GM12878 (cell line): ENCODE measurements at regions of chr15 and their contacts with region 1.

Region 1: DNA sequence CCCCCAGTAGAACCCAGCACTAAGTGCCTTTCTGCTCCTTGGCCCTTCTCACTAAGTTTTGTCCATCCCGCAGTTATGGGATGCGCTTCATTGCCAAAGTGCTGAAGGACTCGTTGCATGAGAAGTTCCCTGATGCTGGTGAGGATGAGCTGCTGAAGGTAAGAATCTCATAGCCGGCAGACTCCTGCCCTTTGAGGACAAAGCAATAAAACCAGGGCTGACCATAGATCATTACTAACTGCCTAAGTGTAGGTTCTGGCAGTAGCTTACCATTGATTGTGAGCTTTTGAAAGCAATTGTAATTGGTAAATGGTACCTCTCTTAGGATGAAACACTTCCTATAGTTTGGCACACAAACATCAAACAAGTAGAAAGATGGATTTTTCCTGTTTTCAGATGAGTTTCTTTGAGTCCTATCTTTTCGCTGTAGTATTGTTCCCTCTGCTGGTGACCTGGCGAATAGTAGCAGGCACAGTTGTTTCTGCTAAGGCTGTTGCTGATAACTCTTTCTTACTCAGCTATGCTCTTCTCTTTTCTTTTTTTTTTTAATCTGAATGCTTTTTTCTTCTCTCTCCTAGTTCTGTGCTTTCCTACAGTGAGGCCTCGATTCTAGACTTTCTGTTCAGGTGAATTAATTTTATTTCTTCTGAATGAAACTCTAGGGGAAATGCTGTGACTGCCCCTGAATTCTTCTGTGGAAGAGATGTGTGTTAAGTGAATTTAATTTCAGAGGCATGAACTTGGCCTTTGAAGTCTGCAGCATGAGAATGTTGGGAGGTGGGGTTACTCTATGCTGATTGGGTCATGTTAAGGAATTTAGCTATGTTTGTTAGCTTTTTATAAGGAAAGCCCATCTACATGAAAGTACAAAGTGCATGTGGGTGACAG is 47.4 kb upstream of the CRTC3 start:
- DNase-seq: no peak
- ATAC-seq: peak; percentile 69
- H3K4me3 ChIP-seq: no peak overlapping the region
- H3K27ac ChIP-seq: no peak overlapping the region
- H3K4me1 ChIP-seq: no peaks in the 10 kb centered on the region
- H3K27me3 ChIP-seq: no peaks in the 10 kb centered on the region
- CTCF ChIP-seq: peak; percentile 52 to 66 (median 53); a peak in 4 of 6 replicates
- EP300 ChIP-seq: no peak
- POLR2A ChIP-seq: no peak
- RAD21 ChIP-seq: peak; percentile 82

Region 2: DNA sequence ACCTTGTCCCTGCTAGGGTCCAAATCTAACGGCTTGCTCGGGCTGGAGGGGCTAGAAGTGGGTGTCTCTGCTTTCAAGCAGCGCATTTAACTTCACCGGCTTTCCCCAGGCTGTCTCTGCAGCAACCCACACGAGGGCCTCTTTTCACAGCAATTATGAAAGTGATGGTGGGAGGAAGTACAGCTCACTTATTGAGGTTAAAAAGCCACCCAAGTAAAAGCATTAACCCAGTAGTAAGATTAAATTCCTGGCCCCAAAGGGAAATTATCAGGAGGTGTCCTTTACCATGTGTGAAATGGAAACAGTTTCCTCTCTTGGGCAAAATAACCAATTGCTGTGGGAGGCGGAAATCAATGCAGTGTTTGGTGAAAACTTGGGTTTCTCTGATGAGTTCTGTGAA is 175.8 kb before region 1 on chr15:
- CTCF ChIA-PET with region 1: interaction called, 20 read pairs
- POLR2A ChIA-PET with region 1: interaction called, 7 read pairs
- RAD21 ChIA-PET with region 1: interaction called, 7 read pairs
- SMC1A ChIA-PET with region 1: interaction called, 5 read pairs
- in situ Hi-C with region 1: no loop called
- intact Hi-C with region 1: no loop called
- DNase-seq: peak; percentile 36
- ATAC-seq: peak; percentile 96
- H3K4me3 ChIP-seq: peak overlapping the region; percentile 17; the same call in 1 of the 2 replicates
- H3K27ac ChIP-seq: peak overlapping the region; percentile 60
- H3K4me1 ChIP-seq: peaks cover 22% of the 10 kb centered on the region
- H3K27me3 ChIP-seq: no peaks in the 10 kb centered on the region
- CTCF ChIP-seq: peak in 1 of 3 experiments; percentile 37; a peak in 2 of 6 replicates
- EP300 ChIP-seq: no peak
- POLR2A ChIP-seq: 0 out of 2 replicates have a peak, but pooled peaks have one; percentile 28
- RAD21 ChIP-seq: peak; percentile 39

Region 3: GRCh38 chr15:90463381-90463780 is 19.0 kb before region 1 on chr15:
- CTCF ChIA-PET with region 1: interaction called, 13 read pairs
- POLR2A ChIA-PET with region 1: interaction called, 3 read pairs
- RAD21 ChIA-PET with region 1: no interaction called
- SMC1A ChIA-PET with region 1: interaction called, 23 read pairs
- in situ Hi-C with region 1: no loop called
- intact Hi-C with region 1: no loop called
- DNase-seq: no peak
- ATAC-seq: peak; percentile 88
- H3K4me3 ChIP-seq: no peak overlapping the region
- H3K27ac ChIP-seq: no peak overlapping the region
- H3K4me1 ChIP-seq: peaks cover 3% of the 10 kb centered on the region; the same call in 1 of the 2 replicates
- H3K27me3 ChIP-seq: no peaks in the 10 kb centered on the region
- CTCF ChIP-seq: no peak
- EP300 ChIP-seq: no peak
- POLR2A ChIP-seq: no peak
- RAD21 ChIP-seq: no peak

Region 4: DNA sequence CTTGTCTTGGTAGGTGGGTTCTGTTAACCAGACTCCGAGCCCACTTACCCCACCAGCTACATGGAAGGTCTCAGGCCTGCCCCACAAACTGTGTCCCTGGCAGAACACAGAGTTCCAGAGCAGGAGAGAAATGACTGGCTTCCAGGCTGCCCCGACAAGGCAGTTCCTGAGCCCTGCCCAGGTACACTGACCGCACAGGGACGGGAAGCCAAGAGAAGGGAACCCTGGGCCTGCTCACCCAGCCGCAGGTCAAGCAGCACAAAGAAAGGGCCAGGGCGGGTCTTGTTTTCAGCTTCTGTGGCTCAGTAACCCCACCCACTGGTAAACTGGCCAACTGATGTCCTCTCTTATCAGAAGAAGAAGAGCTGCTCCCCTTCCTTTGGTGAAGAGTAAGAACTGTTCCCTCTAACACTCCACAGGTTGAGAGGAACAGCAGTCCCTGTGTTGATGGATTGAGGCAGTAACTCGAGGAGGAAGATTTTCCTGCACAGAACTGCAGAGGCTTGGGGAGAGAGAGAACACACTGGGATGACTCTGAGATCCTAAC is 115.7 kb after region 1 on chr15:
- CTCF ChIA-PET with region 1: interaction called, 14 read pairs
- POLR2A ChIA-PET with region 1: no interaction called
- RAD21 ChIA-PET with region 1: interaction called, 5 read pairs
- SMC1A ChIA-PET with region 1: interaction called, 9 read pairs
- in situ Hi-C with region 1: no loop called
- intact Hi-C with region 1: no loop called
- DNase-seq: peak; percentile 46
- ATAC-seq: peak; percentile 64
- H3K4me3 ChIP-seq: peak overlapping the region; percentile 44; the same call in 1 of the 2 replicates
- H3K27ac ChIP-seq: peak overlapping the region; percentile 82
- H3K4me1 ChIP-seq: peaks cover 54% of the 10 kb centered on the region
- H3K27me3 ChIP-seq: no peaks in the 10 kb centered on the region
- CTCF ChIP-seq: peak; percentile 32 to 57 (median 44); a peak in 5 of 6 replicates
- EP300 ChIP-seq: no peak
- POLR2A ChIP-seq: peak; percentile 59
- RAD21 ChIP-seq: peak; percentile 70

Region 5: DNA sequence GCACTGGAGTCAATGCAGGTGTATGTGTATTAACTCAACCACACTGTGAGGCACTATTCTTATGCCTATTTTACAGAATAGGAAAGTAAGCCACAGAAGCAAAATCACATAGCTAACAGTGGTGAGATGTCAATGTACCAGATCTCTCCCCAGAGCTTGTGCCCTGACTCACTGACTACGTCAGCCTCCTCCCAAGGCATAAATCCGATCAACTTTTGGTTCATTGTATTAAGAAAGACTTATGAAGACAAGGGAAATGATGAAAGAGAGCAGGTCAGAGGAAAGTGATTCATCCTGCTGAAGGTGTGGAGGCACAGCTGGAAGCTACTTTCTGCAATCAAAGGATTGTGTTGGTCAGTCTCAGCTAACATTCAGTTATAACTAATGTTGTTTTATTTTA is 584.7 kb after region 1 on chr15:
- CTCF ChIA-PET with region 1: no interaction called
- POLR2A ChIA-PET with region 1: no interaction called
- RAD21 ChIA-PET with region 1: no interaction called
- SMC1A ChIA-PET with region 1: no interaction called
- in situ Hi-C with region 1: no loop called
- intact Hi-C with region 1: no loop called
- DNase-seq: no peak
- ATAC-seq: no peak
- H3K4me3 ChIP-seq: no peak overlapping the region
- H3K27ac ChIP-seq: no peak overlapping the region
- H3K4me1 ChIP-seq: no peaks in the 10 kb centered on the region
- H3K27me3 ChIP-seq: no peaks in the 10 kb centered on the region; a peak in 1 of 4 replicates
- CTCF ChIP-seq: no peak
- EP300 ChIP-seq: no peak
- POLR2A ChIP-seq: no peak
- RAD21 ChIP-seq: no peak